Spleen (tissue), 13 donors: ENCODE measurements at regions of chr1 and their contacts with region 1.

Region 1: GRCh38 chr1:39422614-39423013 is 68.8 kb upstream of the BMP8A start:
- DNase-seq: no peak
- H3K4me3 ChIP-seq: no peak overlapping the region
- H3K27ac ChIP-seq: no peak overlapping the region
- H3K4me1 ChIP-seq: peaks cover 0 to 33% (median 7%) of the 10 kb centered on the region in 6 donors
- H3K27me3 ChIP-seq: no peaks in the 10 kb centered on the region
- CTCF ChIP-seq: no peak
- POLR2A ChIP-seq: no peak

Region 2: GRCh38 chr1:39378377-39378776 is 44.2 kb before region 1 on chr1:
- intact Hi-C with region 1: loop called (anchors 10 kb)
- DNase-seq: no peak
- H3K4me3 ChIP-seq: no peak overlapping the region
- H3K27ac ChIP-seq: no peak overlapping the region
- H3K4me1 ChIP-seq: peaks cover 0 to 4% (median 0%) of the 10 kb centered on the region in 6 donors
- H3K27me3 ChIP-seq: no peaks in the 10 kb centered on the region
- CTCF ChIP-seq: peak in 1 of 11 experiments; percentile 12
- POLR2A ChIP-seq: no peak